Pancreas (tissue), 10 donors: ENCODE measurements at regions of chr12 and their contacts with region 1.

Region 1: DNA sequence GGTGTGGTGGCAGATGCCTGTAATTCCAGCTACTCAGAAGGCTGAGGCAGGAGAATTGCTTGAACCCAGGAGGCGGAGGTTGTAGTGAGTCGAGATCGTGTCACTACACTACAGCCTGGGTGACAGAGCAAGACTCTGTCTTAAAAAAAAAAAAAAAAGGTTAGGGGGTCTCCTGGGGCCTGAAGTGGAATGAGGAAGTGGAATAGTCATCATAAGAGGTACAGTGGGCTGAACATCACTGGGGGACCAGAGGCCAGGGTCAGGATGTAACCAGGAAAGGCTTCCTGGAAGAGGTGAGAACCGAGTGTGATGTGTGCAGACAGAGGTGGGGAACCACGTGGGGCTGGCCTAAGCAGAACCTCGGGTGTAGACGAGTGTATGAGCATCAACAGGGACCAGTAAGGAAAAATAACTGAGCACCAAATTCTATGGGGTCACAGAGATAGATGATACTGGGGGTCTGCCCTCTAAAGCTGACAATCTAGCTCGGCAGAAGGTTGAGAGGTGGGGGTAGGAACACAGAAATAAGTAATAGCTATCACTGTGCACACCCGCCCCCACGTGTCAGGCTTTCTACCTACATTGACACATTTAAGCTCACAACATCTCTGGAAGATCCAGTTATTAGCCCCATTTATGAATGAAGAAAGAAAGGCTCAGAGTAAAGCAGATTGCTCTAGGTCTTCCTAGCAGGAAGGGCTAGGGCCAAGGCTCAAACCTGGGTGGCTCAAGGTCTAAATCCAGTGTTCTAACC is 5.0 kb upstream of the COX6A1 start:
- DNase-seq: no peak
- ATAC-seq: no peak
- H3K4me3 ChIP-seq: no peak overlapping the region
- H3K27ac ChIP-seq: no peak overlapping the region
- H3K4me1 ChIP-seq: no peaks in the 10 kb centered on the region
- H3K27me3 ChIP-seq: no peaks in the 10 kb centered on the region
- CTCF ChIP-seq: no peak

Region 2: DNA sequence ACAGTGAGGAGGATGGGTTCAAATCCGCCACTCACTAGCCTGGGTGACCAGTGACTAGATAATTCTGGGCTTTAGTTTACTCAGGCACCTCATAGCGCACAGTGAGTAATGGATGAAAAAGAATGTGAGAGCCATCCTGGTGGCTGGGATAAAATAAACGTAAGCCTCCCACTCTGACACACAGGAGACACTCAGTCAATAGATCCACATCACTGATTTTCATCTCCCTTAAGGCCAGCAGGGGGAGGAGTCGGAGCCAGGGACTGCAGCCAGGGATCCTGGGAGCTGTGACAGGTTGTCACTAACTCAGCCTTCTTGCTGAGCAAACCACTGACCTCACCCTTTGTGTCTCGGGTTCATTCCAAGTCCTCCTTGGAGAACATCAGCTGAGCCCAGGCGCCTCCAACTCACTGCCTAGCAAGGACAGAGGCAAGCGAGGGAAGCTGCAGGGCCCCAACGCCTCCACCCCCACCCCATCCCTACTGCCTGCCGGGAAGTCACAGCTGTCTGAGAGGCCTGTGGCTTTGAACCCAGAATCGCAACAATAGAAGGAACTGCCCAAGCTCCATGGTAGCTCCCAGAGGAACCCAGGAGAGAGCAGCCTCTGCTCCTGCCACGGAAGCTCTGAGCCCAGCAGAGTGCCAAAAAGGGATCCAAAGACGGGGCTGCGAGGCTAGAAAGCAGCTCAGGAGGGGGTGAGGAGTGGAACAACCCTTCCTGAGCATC is 198.1 kb before region 1 on chr12:
- intact Hi-C with region 1: no loop called
- DNase-seq: peak; percentile 70 to 89 (median 86)
- ATAC-seq: peak; percentile 79 to 87 (median 82)
- H3K4me3 ChIP-seq: no peak overlapping the region
- H3K27ac ChIP-seq: peak overlapping the region; percentile 32 to 83 (median 60)
- H3K4me1 ChIP-seq: peaks cover 41 to 68% (median 44%) of the 10 kb centered on the region in 3 donors
- H3K27me3 ChIP-seq: no peaks in the 10 kb centered on the region
- CTCF ChIP-seq: peak in 2 of 4 donors; percentile 10 to 26

Region 3: GRCh38 chr12:120356567-120357030 is 76.3 kb before region 1 on chr12:
- intact Hi-C with region 1: loop called (anchors 5 to 10 kb)
- DNase-seq: peak; percentile 64 to 88 (median 80)
- ATAC-seq: peak; percentile 84 to 97 (median 92)
- H3K4me3 ChIP-seq: no peak overlapping the region
- H3K27ac ChIP-seq: no peak overlapping the region
- H3K4me1 ChIP-seq: peaks cover 0 to under 1% (median 0%) of the 10 kb centered on the region in 3 donors
- H3K27me3 ChIP-seq: no peaks in the 10 kb centered on the region
- CTCF ChIP-seq: peak; percentile 66 to 76 (median 69)

Region 4: GRCh38 chr12:120481022-120481767 is 48.2 kb after region 1 on chr12:
- intact Hi-C with region 1: no loop called
- DNase-seq: no peak
- ATAC-seq: no peak
- H3K4me3 ChIP-seq: no peak overlapping the region
- H3K27ac ChIP-seq: no peak overlapping the region
- H3K4me1 ChIP-seq: no peaks in the 10 kb centered on the region
- H3K27me3 ChIP-seq: no peaks in the 10 kb centered on the region
- CTCF ChIP-seq: no peak